Panc1 (cell line): ENCODE measurements at regions of chr2 and their contacts with region 1.

Region 1: DNA sequence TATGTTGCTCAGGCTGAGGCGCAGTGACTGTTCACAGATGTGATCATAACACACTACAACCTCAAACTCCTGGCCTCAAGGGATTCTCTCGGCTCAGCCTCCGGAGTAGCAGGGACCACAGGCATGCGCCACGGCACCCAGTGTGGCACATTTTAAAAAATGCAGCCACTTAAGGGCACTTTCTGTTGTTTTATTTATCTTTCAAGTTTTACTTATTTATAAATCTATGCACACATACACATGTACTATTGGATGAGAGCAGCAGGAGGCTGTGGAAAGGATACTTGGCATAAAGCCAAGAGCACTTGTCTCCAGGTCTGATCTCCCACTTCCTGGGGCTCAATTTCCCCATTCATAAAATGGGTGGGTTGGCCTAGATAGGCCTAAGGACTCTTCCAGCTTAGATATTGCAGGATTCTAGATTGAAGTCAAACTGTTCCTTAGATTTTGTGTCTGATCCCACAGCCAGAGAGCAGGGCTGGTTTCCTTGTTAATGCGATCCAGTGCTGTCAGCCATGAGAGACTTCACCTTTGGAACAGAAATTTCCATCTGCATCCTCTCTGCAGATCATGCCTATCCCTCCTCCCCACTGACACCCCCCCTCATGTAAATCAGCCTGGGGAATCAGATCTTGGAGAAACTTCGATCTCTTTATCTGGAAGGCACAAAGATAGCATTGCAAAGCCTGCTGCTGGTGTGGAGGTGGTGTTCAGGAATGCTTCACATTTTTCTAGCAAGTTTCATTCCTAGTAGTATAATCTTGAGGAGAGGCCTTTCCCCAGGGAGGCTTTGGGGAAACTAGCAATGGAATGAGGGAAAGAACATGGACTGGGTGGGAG is 24.7 kb downstream of the PCBP1 start:
- DNase-seq: no peak
- ATAC-seq: no peak
- H3K4me3 ChIP-seq: peak overlapping the region in 1 of 2 experiments; percentile 10; a peak in 1 of 4 replicates
- H3K27ac ChIP-seq: peak overlapping the region; percentile 78
- H3K4me1 ChIP-seq: peaks cover 50% of the 10 kb centered on the region
- H3K27me3 ChIP-seq: no peaks in the 10 kb centered on the region
- CTCF ChIP-seq: no peak

Region 2: DNA sequence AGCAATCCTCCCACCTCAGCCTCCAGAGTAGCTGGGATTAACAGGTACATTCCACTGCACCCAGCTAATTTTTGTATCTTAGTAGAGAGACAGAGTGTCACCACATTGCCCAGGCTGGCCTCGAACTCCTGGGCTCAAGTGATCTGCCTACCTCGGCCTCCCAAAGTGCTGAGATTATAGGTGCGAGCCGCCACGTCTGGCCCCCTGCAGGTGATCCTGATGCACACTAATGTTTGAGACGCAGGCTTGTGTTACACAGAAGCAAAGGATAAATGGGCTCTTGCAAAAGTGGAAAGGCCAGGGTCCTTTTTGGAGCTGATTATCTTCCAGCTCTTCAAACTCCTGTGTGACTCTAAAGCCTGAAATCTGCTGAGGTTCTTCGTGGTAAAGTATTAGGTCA is 357.5 kb after region 1 on chr2:
- CTCF ChIA-PET with region 1: no interaction called
- POLR2A ChIA-PET with region 1: interaction called, 13 read pairs
- in situ Hi-C with region 1: no loop called
- intact Hi-C with region 1: no loop called
- DNase-seq: no peak
- ATAC-seq: no peak
- H3K4me3 ChIP-seq: no peak overlapping the region
- H3K27ac ChIP-seq: no peak overlapping the region
- H3K4me1 ChIP-seq: no peaks in the 10 kb centered on the region
- H3K27me3 ChIP-seq: peaks cover 3% of the 10 kb centered on the region
- CTCF ChIP-seq: no peak

Region 3: GRCh38 chr2:70960369-70960811 is 848.4 kb after region 1 on chr2:
- CTCF ChIA-PET with region 1: no interaction called
- POLR2A ChIA-PET with region 1: no interaction called
- in situ Hi-C with region 1: no loop called
- intact Hi-C with region 1: no loop called
- DNase-seq: no peak
- ATAC-seq: no peak
- H3K4me3 ChIP-seq: no peak overlapping the region
- H3K27ac ChIP-seq: no peak overlapping the region
- H3K4me1 ChIP-seq: no peaks in the 10 kb centered on the region
- H3K27me3 ChIP-seq: no peaks in the 10 kb centered on the region; the same call in 1 of the 2 replicates
- CTCF ChIP-seq: no peak

Region 4: GRCh38 chr2:71471276-71471675 is 1359.3 kb after region 1 on chr2:
- CTCF ChIA-PET with region 1: no interaction called
- POLR2A ChIA-PET with region 1: no interaction called
- in situ Hi-C with region 1: no loop called
- intact Hi-C with region 1: no loop called
- DNase-seq: no peak
- ATAC-seq: no peak
- H3K4me3 ChIP-seq: no peak overlapping the region
- H3K27ac ChIP-seq: no peak overlapping the region
- H3K4me1 ChIP-seq: 0 out of 2 replicates have a peak, but pooled peaks cover 3% of the 10 kb centered on the region
- H3K27me3 ChIP-seq: peaks cover 10% of the 10 kb centered on the region
- CTCF ChIP-seq: no peak